ENCODE measurements at regions of chr11 and their contacts with region 1.

Region 1: GRCh38 chr11:130904380-130904779 is 11.9 kb downstream of the SNX19 start:
- DNase-seq: peak; percentile 22
- H3K4me3 ChIP-seq: no peak overlapping the region
- H3K27ac ChIP-seq: no peak overlapping the region
- H3K4me1 ChIP-seq: no peaks in the 10 kb centered on the region
- H3K27me3 ChIP-seq: no peaks in the 10 kb centered on the region
- CTCF ChIP-seq: peak; percentile 58

Region 2: GRCh38 chr11:129100193-129100592 is 1804.2 kb before region 1 on chr11:
- CTCF ChIA-PET with region 1: no interaction called
- POLR2A ChIA-PET with region 1: no interaction called
- intact Hi-C with region 1: no loop called
- DNase-seq: no peak
- H3K4me3 ChIP-seq: no peak overlapping the region
- H3K27ac ChIP-seq: no peak overlapping the region
- H3K4me1 ChIP-seq: no peaks in the 10 kb centered on the region
- H3K27me3 ChIP-seq: no peaks in the 10 kb centered on the region
- CTCF ChIP-seq: no peak

Region 3: GRCh38 chr11:130478204-130478701 is 426.1 kb before region 1 on chr11:
- CTCF ChIA-PET with region 1: no interaction called
- POLR2A ChIA-PET with region 1: no interaction called
- intact Hi-C with region 1: no loop called
- DNase-seq: peak; percentile 42
- H3K4me3 ChIP-seq: no peak overlapping the region
- H3K27ac ChIP-seq: no peak overlapping the region
- H3K4me1 ChIP-seq: peaks cover 42% of the 10 kb centered on the region
- H3K27me3 ChIP-seq: no peaks in the 10 kb centered on the region
- CTCF ChIP-seq: no peak

Region 4: DNA sequence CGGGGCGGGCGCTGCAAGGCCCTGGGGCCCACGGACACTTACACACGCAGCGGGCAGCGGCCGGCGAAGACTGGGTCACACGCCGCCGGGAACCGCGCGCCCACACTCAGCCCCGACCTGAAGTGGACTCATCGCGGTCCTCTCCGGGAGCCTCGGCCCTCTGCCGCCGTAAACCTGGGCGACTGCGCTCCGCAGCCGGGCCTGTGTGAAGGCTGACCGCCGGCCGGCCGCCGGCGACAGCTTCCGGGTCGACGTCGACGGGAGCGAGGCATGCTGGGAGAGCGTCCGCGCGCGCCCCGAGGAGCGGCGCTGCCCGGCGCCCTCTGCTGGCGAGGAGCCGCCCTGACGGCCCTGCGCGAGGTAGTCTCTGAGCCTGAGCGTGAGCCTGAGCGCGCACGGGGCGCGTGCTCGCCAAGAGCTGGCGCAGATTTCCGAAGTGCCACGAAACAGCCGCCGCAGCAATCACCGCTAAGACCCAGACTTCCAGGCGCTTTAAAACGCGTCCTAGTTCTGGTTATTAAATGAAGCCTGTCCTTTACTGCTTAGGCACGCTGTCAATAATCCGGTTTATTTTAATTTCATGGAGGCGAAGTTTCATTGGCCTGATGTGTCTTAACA is 12.0 kb after region 1 on chr11 and contains the start of gene SNX19:
- CTCF ChIA-PET with region 1: interaction called, 12 read pairs
- POLR2A ChIA-PET with region 1: no interaction called
- intact Hi-C with region 1: no loop called
- DNase-seq: peak; percentile 95
- H3K4me3 ChIP-seq: peak within 1 kb of the TSS; percentile 80
- H3K27ac ChIP-seq: peak within 1 kb of the TSS; percentile 82
- H3K4me1 ChIP-seq: peaks cover 4% of the 10 kb centered on the region
- H3K27me3 ChIP-seq: no peaks in the 10 kb centered on the region
- CTCF ChIP-seq: peak; percentile 93
- total RNA-seq, gene SNX19: 51.9 and 52.5 TPM in 2 replicates

Region 5: GRCh38 chr11:131178596-131178995 is 274.2 kb after region 1 on chr11:
- CTCF ChIA-PET with region 1: no interaction called
- POLR2A ChIA-PET with region 1: no interaction called
- intact Hi-C with region 1: no loop called
- DNase-seq: no peak
- H3K4me3 ChIP-seq: no peak overlapping the region
- H3K27ac ChIP-seq: no peak overlapping the region
- H3K4me1 ChIP-seq: no peaks in the 10 kb centered on the region
- H3K27me3 ChIP-seq: peaks cover 31% of the 10 kb centered on the region
- CTCF ChIP-seq: no peak

Measured in A673 (cell line).